ENCODE measurements at regions of chr1 and their contacts with region 1.

Region 1: GRCh38 chr1:179816196-179816960 is 61.2 kb downstream of the TOR1AIP2 start:
- DNase-seq: peak; percentile 77
- ATAC-seq: peak; percentile 3

Region 2: GRCh38 chr1:179510038-179510437 is 306.3 kb before region 1 on chr1:
- intact Hi-C with region 1: no loop called
- DNase-seq: no peak
- ATAC-seq: no peak

Region 3: GRCh38 chr1:179794669-179795068 is 21.7 kb before region 1 on chr1:
- intact Hi-C with region 1: no loop called
- DNase-seq: no peak
- ATAC-seq: peak; percentile 75

Region 4: GRCh38 chr1:179882243-179883039 is 66.1 kb after region 1 on chr1 and contains the start of gene TOR1AIP1:
- intact Hi-C with region 1: loop called (anchors 5 kb)
- DNase-seq: peak; percentile 99
- ATAC-seq: peak; percentile 95
- total RNA-seq, gene TOR1AIP1: 41.9 TPM